Activated naive CD4-positive, alpha-beta T cell treated with anti-CD3 and anti-CD28 coated beads for 36 hours (primary cell): ENCODE measurements at regions of chr3 and their contacts with region 1.

Region 1: GRCh38 chr3:101902041-101902440 is 52.7 kb downstream of the NFKBIZ start:
- DNase-seq: peak; percentile 69
- H3K4me3 Mint-ChIP-seq: no peak overlapping the region
- H3K27ac Mint-ChIP-seq: no peak overlapping the region
- H3K4me1 Mint-ChIP-seq: peaks cover 17% of the 10 kb centered on the region
- H3K27me3 Mint-ChIP-seq: no peaks in the 10 kb centered on the region

Region 2: DNA sequence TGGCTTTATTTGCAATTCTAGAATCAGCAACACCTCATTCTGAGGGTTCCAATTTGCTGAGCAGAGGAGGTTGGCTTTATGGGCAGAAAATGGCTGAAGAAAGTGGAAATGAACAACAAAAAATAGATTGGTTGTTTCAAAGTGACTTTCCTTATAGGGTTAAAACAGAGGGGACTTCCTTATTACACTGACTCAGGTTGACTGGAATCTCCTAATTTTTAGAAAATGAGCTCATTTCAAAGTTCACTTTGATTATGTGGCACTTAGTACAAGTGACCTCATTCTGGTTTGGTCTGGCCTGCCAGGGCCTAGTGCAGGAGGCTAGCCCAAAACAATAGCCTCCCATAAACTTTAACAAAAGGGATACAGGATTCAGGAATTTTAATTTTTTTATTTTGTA is 11.3 kb before region 1 on chr3:
- CTCF ChIA-PET with region 1: interaction called, 4 read pairs
- intact Hi-C with region 1: loop called (anchors 1 kb)
- DNase-seq: peak; percentile 43
- H3K4me3 Mint-ChIP-seq: no peak overlapping the region
- H3K27ac Mint-ChIP-seq: no peak overlapping the region
- H3K4me1 Mint-ChIP-seq: peaks cover 12% of the 10 kb centered on the region
- H3K27me3 Mint-ChIP-seq: no peaks in the 10 kb centered on the region

Region 3: DNA sequence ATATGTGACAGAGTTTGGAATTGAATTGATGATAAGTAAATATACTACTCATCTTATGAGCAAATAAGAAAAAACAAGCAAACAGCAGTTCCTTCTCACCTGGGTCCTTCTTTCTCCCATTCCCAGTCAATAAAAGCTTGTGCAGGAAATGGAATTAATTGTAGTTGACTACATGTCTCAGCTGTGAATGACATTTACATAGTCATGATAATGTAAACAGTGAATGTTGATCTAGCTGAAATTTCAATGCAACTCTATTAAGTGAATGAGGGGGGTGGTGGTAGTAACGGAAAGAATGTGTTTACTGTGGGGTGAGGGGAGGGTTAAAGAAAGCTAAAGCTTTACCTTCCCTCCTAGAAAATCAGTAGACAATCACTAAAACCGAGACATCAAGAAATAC is 23.5 kb after region 1 on chr3:
- CTCF ChIA-PET with region 1: no interaction called
- intact Hi-C with region 1: loop called (anchors 1 kb)
- DNase-seq: no peak
- H3K4me3 Mint-ChIP-seq: no peak overlapping the region
- H3K27ac Mint-ChIP-seq: no peak overlapping the region
- H3K4me1 Mint-ChIP-seq: peaks cover 30% of the 10 kb centered on the region
- H3K27me3 Mint-ChIP-seq: no peaks in the 10 kb centered on the region

Region 4: DNA sequence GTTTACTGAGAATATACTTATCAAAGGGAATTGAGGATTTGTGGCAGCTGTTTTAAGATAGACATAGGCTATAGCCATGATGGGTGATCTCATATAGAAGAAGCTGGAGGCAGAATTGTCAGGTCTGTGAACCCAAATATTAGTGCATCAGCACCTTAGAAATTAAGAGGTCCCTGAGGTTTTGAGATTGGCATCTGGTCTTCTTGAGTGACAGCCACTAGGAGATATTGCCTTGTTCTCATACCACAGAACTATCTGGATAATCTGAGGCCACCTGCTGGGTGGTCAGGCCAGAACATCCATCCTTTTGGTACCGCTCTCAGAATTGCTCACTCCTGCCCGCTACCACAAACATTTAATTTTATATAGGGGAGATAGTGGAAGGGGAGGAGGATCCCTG is 322.1 kb after region 1 on chr3:
- CTCF ChIA-PET with region 1: interaction called, 3 read pairs
- intact Hi-C with region 1: loop called (anchors 1 kb)
- DNase-seq: peak; percentile 50
- H3K4me3 Mint-ChIP-seq: no peak overlapping the region
- H3K27ac Mint-ChIP-seq: no peak overlapping the region
- H3K4me1 Mint-ChIP-seq: peaks cover 35% of the 10 kb centered on the region
- H3K27me3 Mint-ChIP-seq: no peaks in the 10 kb centered on the region